ENCODE measurements at regions of chr13 and their contacts with region 1.

Region 1: DNA sequence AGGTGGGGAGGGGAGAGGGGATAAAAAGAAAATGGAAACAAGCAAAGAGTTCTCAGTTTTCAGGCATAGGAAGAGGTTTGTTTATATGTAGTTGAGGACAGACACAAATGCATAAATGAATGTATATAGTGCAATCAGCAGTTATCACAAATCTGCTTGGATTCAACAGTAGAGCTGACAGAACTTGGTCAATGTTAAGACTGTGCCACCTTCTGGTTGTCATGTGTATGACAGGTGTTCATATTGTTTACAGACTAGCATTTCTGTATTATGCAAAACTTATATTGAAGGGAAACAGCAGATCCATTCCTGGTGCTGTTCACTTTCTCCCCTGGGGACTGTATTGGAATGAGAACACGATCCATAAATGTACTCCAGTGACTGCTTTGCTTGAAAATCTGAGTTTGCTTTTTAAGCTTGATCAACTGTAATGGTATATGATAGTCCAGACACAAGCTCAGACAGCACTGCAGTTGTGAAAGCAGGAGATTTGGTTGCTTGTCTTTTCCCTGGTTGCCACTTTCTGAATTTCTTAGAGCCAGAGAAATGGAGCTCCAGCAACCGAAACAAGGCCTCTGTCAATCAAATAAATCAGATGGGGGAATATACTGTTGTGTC is 319.5 kb upstream of the OBI1 start:
- DNase-seq: no peak
- ATAC-seq: peak; percentile 77
- H3K4me3 Mint-ChIP-seq: no peak overlapping the region
- H3K27ac Mint-ChIP-seq: no peak overlapping the region
- H3K4me1 Mint-ChIP-seq: no peaks in the 10 kb centered on the region
- H3K27me3 Mint-ChIP-seq: peaks cover 15% of the 10 kb centered on the region
- CTCF ChIP-seq: peak; percentile 93

Region 2: DNA sequence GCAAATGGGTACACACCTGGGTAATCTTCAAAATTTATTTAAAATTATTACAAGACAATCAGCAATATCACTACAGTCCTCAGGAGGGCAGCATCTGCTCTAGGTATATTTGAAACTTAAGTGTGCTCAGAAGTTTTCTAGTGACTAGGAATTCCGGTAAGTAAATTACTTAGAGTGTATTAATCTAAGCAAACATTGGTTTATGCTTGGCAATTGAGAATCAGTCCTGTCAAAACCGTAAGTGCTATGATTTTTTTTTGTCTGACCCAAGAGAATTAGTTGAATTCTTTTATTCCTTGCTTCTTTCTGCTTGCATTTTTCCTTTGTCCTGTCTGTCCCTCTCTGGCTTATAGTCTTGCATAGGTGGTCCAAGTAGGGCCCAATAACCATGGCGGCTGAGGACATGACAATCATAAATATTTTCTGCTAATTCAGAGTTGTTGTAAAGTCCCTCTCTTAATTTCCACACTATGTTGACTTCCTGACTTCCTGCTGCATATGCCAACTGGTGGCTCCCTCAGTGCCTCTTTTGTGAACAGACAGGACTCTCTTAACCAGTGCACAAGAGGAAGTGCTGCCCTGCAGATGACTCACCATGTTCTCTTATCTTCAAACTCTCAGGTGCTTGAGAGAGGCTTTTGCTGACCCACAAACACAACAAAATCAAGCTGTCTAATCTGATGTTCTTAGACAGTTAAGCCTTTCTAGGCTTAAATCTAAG is 1198.8 kb before region 1 on chr13:
- CTCF ChIA-PET with region 1: no interaction called
- POLR2A ChIA-PET with region 1: no interaction called
- intact Hi-C with region 1: loop called (anchors 5 kb)
- DNase-seq: no peak
- ATAC-seq: peak; percentile 60
- H3K4me3 Mint-ChIP-seq: no peak overlapping the region
- H3K27ac Mint-ChIP-seq: no peak overlapping the region
- H3K4me1 Mint-ChIP-seq: peaks cover 6% of the 10 kb centered on the region
- H3K27me3 Mint-ChIP-seq: no peaks in the 10 kb centered on the region
- CTCF ChIP-seq: peak; percentile 37

Region 3: GRCh38 chr13:78131811-78132210 is 846.7 kb before region 1 on chr13:
- CTCF ChIA-PET with region 1: interaction called, 69 read pairs
- POLR2A ChIA-PET with region 1: no interaction called
- intact Hi-C with region 1: loop called (anchors 1 kb)
- DNase-seq: no peak
- ATAC-seq: no peak
- H3K4me3 Mint-ChIP-seq: no peak overlapping the region
- H3K27ac Mint-ChIP-seq: no peak overlapping the region
- H3K4me1 Mint-ChIP-seq: no peaks in the 10 kb centered on the region
- H3K27me3 Mint-ChIP-seq: peaks cover 13% of the 10 kb centered on the region
- CTCF ChIP-seq: no peak

Region 4: DNA sequence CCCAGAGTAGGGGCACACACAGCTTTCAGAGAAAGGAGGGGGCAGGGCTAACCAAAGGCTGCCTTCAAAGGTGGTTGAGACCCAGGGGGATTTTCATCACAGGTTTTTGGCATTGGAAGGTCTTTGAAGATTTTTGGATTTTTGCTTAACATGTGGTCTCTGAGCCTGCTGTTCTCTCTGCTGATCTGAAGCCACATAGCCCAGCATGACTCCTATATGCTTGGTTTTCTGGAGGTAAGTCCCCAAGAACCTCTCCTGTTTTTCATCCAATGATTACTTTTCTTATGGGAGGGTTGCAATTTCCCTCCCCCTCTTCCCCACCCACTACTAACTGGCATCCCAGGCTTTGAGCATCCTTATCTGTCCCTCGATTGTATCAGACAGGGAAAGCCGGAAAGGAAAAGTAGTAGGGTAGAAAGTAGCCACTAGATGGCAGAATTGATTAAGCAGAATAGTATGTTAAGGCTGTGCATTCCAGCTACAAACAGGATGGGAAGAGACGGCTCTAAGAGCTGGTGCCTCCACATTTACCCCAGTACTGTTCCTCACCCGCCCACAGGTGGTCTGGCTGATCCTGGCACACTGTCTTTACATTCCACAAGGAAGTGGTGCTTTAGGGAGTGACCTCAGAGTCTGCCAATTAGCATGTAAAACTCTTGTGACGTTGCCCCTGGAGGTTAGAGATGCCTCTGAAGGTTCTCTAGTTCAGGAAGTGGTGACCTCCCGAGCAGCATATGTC is 840.9 kb before region 1 on chr13:
- CTCF ChIA-PET with region 1: interaction called, 69 read pairs
- POLR2A ChIA-PET with region 1: no interaction called
- intact Hi-C with region 1: loop called (anchors 1 kb)
- DNase-seq: peak; percentile 18
- ATAC-seq: peak; percentile 71
- H3K4me3 Mint-ChIP-seq: peak overlapping the region; percentile 79
- H3K27ac Mint-ChIP-seq: no peak overlapping the region
- H3K4me1 Mint-ChIP-seq: peaks cover 5% of the 10 kb centered on the region
- H3K27me3 Mint-ChIP-seq: peaks cover 5% of the 10 kb centered on the region
- CTCF ChIP-seq: no peak

Region 5: DNA sequence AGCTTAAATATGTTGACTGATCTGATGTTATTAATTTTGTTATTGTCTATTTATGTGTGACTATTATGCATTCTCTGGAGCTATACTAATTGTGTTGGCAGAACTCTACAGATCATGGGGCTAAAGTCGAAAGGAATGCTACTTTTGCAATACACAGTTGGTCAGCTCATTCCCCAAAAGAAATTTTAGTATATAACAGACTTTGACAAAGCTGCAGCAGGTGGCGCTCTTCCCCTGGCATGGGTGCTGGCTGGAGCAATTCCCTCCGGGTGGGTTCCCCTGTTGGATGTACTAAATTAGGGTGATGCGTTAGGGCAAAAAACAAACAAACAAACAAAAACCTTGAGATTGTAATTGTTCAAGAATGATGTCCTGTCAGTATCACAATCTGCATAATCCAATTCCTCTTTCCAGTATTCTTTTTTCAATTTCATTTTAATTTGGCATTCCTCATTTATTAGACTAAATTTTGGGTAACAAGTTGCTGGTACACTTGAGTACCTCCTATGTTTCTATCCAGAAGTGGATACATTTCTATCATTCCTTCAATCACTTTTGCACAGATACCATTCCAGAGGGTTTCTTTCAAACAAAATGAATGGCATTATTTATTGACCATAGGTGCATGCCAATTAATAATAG is 737.1 kb before region 1 on chr13:
- CTCF ChIA-PET with region 1: interaction called, 6 read pairs
- POLR2A ChIA-PET with region 1: no interaction called
- intact Hi-C with region 1: loop called (anchors 1 kb)
- DNase-seq: no peak
- ATAC-seq: no peak
- H3K4me3 Mint-ChIP-seq: no peak overlapping the region
- H3K27ac Mint-ChIP-seq: no peak overlapping the region
- H3K4me1 Mint-ChIP-seq: no peaks in the 10 kb centered on the region
- H3K27me3 Mint-ChIP-seq: no peaks in the 10 kb centered on the region
- CTCF ChIP-seq: no peak

Region 6: GRCh38 chr13:78317030-78317429 is 661.5 kb before region 1 on chr13:
- CTCF ChIA-PET with region 1: no interaction called
- POLR2A ChIA-PET with region 1: no interaction called
- intact Hi-C with region 1: loop called (anchors 1 kb)
- DNase-seq: no peak
- ATAC-seq: no peak
- H3K4me3 Mint-ChIP-seq: no peak overlapping the region
- H3K27ac Mint-ChIP-seq: no peak overlapping the region
- H3K4me1 Mint-ChIP-seq: no peaks in the 10 kb centered on the region
- H3K27me3 Mint-ChIP-seq: no peaks in the 10 kb centered on the region
- CTCF ChIP-seq: no peak

Region 7: GRCh38 chr13:79246578-79246949 is 268.1 kb after region 1 on chr13:
- CTCF ChIA-PET with region 1: interaction called, 8 read pairs
- POLR2A ChIA-PET with region 1: no interaction called
- intact Hi-C with region 1: loop called (anchors 1 kb)
- DNase-seq: no peak
- ATAC-seq: no peak
- H3K4me3 Mint-ChIP-seq: no peak overlapping the region
- H3K27ac Mint-ChIP-seq: no peak overlapping the region
- H3K4me1 Mint-ChIP-seq: peaks cover 7% of the 10 kb centered on the region
- H3K27me3 Mint-ChIP-seq: no peaks in the 10 kb centered on the region
- CTCF ChIP-seq: no peak